ENCODE measurements at regions of chr3 and their contacts with region 1.

Region 1: GRCh38 chr3:192879336-192880106 is 38.1 kb downstream of the MB21D2 start:
- DNase-seq: peak; percentile 95
- H3K4me3 ChIP-seq: peak overlapping the region in 2 of 3 experiments; percentile 12 to 28
- H3K27ac ChIP-seq: peak overlapping the region; percentile 85
- H3K4me1 ChIP-seq: peaks cover 22% of the 10 kb centered on the region
- H3K27me3 ChIP-seq: no peaks in the 10 kb centered on the region
- CTCF ChIP-seq: no peak

Region 2: GRCh38 chr3:192851821-192852424 is 27.6 kb before region 1 on chr3:
- CTCF ChIA-PET with region 1: interaction called, 3 read pairs
- dilution Hi-C with region 1: no loop called
- in situ Hi-C with region 1: no loop called
- intact Hi-C with region 1: loop called (anchors 1 kb)
- DNase-seq: peak; percentile 93
- H3K4me3 ChIP-seq: no peak overlapping the region
- H3K27ac ChIP-seq: peak overlapping the region; percentile 90
- H3K4me1 ChIP-seq: peaks cover 27% of the 10 kb centered on the region
- H3K27me3 ChIP-seq: no peaks in the 10 kb centered on the region
- CTCF ChIP-seq: no peak

Region 3: DNA sequence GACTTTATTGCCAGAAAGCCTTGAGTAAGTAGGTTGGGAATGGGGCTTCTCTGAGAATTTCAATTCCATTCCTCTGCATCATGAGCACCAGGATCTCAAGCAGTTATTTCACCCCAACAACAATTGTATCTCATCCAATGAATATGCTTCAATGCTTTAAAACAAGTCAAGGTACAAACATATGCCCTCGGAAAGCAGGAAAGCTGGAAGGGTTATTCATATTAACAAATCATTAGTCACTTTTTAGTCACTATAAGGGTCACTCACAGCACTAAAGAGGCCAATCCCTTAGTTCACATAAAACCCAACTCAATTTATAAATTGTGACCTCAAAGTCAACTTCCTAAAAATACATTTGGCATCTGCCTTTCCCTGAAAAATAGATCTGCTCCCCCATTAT is 21.9 kb after region 1 on chr3:
- CTCF ChIA-PET with region 1: no interaction called
- dilution Hi-C with region 1: no loop called
- in situ Hi-C with region 1: no loop called
- intact Hi-C with region 1: loop called (anchors 2 kb)
- DNase-seq: peak; percentile 85
- H3K4me3 ChIP-seq: no peak overlapping the region
- H3K27ac ChIP-seq: peak overlapping the region; percentile 45
- H3K4me1 ChIP-seq: peaks cover 22% of the 10 kb centered on the region
- H3K27me3 ChIP-seq: no peaks in the 10 kb centered on the region
- CTCF ChIP-seq: no peak

Region 4: GRCh38 chr3:192943393-192943792 is 63.9 kb after region 1 on chr3:
- CTCF ChIA-PET with region 1: no interaction called
- dilution Hi-C with region 1: no loop called
- in situ Hi-C with region 1: no loop called
- intact Hi-C with region 1: no loop called
- DNase-seq: no peak
- H3K4me3 ChIP-seq: no peak overlapping the region
- H3K27ac ChIP-seq: no peak overlapping the region
- H3K4me1 ChIP-seq: peaks cover 6% of the 10 kb centered on the region
- H3K27me3 ChIP-seq: no peaks in the 10 kb centered on the region
- CTCF ChIP-seq: no peak